GM10248 (cell line): ENCODE measurements at regions of chr9 and their contacts with region 1.

Region 1: DNA sequence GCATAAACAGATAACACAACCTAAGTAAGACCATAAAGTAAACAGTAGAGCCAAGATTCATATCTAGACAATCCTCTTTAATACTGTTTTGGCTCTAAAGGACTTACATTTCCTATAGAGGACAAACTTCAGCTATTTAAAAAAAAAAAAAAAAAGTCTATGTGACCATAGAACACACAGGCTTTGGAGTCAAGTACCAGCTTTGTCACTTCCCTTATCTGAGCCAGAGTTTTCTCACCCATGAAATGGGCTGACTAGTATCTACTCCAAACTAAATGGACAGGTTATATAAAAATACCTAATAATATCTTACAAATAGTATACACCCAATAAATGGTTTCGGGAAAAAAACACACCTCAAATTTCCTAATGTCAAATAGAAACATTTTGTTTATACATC is 81.3 kb downstream of the STRBP start:
- DNase-seq: no peak
- CTCF ChIP-seq: no peak

Region 2: DNA sequence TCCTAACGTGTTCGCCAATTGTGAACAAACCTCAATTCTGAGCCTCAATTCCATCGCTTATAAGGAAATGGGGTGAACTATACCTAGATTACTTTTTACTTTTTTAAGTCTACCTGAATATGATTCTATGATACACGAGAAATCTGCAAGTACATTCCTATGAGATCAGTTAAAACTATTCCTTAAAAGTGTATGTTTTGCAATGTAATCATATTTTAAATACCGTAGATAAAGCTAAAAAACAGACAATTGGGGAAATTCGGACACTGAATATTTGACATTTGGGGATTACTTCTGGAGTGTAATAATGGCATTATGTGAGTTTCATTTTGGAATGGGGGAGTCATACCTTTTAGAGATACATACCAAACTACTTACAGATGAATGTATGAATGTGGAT is 18.9 kb after region 1 on chr9:
- CTCF ChIA-PET with region 1: interaction called, 10 read pairs
- POLR2A ChIA-PET with region 1: no interaction called
- DNase-seq: no peak
- CTCF ChIP-seq: no peak

Region 3: DNA sequence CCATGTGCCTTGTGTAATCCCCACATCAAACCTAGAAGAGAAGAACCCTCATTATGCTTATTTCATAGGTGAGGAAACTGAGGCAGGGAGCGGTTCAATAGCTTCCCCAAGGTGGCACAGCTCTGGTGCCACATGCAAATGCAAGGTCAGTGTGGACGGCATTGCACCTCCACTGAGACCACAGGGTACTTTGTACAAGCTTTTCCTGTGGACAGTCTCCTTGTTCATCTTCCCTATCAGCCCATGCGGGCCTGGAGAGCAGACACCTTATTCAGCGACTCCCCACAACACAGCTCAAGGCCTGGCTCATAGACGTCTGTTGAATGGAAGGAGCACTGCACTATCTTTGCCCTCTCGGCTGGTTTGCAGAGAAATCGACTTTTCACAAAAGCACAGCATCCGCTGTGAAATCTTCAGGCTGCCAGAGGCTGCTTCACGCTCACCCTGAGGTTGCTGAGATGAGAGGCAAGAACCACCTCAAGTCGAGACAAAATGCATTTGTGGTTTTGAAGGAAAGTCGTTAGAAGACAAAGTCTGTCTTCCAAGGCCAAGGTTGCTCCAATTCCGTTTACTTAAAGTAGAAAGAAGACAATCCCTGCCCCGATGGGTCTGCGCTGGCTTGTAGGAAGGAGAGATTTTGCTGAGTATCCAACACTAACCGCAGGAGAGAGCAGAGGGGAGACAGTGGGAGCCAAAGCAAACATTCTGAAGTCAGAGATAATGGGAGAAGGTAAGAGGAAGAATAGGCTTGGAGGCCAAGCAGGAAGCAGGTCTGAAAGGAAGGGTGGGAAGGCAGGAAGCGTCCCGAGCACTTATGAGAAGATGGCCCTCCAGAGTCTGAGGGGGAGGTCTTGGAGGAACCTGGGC is 115.5 kb after region 1 on chr9:
- CTCF ChIA-PET with region 1: no interaction called
- POLR2A ChIA-PET with region 1: no interaction called
- DNase-seq: no peak
- CTCF ChIP-seq: no peak

Region 4: DNA sequence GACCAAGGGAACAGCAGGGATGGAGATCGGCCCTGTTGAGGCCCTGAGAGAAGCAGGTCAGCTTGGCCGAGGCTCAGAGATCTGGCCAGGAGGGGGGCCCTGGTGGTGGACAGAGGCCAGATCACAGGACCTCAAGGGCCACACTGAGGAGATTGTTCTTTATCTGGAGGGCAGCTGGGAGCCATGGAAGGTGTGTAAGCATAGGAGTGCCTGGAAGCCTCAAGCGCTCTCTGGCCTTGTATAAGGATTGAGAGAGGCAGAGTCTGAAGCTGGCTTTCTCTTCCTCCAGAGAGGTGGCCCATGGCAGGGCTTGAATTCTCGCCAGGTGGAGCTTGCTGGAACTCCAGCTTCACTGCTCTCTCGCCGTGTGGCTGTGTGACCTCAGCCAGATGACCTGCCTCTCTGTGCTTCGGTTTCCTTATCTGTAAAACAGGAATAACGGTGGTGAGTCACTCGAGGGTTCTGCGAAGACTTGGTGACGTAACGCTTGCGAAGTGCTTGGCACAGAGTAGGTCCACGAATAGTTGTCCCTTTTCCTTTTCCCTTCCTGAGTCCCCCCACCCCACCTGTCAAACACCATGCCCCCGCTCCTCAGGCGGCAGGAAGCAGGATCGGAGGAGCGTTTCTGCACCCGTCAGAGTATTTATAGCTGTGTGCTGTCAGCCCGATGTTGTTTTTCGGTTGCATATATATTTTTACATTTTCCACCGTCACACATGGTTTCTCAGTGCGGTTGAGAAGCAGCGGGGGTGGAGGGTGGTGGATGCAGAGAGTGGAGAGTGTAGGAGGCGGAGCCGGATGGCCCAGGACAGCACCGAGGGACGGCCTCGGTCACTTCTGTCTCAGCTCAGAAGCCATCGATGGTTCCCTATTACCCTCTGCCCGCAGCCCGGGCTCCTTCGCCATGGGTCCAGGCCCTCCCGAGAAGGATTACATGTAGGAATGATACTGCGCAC is 151.9 kb after region 1 on chr9:
- CTCF ChIA-PET with region 1: no interaction called
- POLR2A ChIA-PET with region 1: interaction called, 13 read pairs
- DNase-seq: peak; percentile 71
- CTCF ChIP-seq: no peak